A549 (cell line): ENCODE measurements at regions of chr6 and their contacts with region 1.

Region 1: GRCh38 chr6:44265007-44265721 is at the start of gene NFKBIE:
- DNase-seq: peak; percentile 80 to 84
- ATAC-seq: peak; percentile 73 to 83
- H3K4me3 ChIP-seq: peak within 1 kb of the TSS; percentile 81
- H3K27ac ChIP-seq: peak within 1 kb of the TSS; percentile 81 to 90
- H3K4me1 ChIP-seq: peaks cover 23% of the 10 kb centered on the region
- CTCF ChIP-seq: peak; percentile 19; the same call in 2 of the 3 replicates
- EP300 ChIP-seq: no peak
- POLR2A ChIP-seq: peak; percentile 81
- RAD21 ChIP-seq: no peak; a peak in 1 of 5 replicates
- polyA plus RNA-seq, gene NFKBIE: 6.2 and 6.3 TPM in 2 replicates

Region 2: DNA sequence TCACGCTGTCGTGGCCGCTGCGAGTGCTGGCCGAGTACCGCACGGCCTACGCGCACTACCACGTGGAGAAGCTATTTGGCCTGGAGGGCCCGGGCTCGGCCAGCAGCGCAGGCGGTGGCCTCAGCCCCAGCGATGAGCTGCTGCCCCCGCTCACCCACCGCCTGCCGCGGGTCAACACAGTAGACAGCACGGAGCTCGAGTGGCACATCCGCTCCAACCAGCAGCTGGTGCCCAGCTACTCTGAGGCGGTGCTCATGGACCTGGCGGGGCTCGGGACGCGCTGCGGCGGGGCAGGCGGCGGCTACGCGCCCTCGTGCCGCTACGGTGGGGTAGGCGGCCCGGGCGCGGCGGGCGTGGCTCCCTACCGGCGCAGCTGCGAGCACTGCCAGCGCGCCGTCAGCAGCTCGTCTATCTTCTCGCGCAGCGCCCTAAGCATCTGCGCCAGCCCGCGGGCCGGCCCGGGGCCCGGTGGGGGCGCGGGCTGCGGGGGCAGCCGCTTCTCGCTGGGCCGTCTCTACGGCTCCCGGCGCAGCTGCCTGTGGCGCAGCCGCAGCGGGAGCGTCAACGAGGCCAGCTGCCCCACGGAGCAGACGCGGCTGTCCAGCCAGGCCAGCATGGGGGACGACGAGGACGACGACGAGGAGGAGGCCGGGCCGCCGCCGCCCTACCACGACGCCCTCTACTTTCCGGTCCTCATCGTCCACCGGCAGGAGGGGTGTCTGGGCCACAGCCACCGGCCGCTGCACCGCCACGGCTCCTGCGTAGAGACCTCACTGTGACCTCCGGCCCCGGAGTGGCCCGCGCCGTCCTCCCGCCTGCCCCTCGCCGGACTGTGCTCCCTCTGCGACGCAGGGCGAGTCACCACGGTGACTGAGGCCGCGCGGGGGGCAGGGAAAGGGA is 10.8 kb after region 1 on chr6:
- CTCF ChIA-PET with region 1: interaction called, 29 read pairs
- POLR2A ChIA-PET with region 1: no interaction called
- DNase-seq: no peak
- ATAC-seq: no peak
- H3K4me3 ChIP-seq: no peak overlapping the region
- H3K27ac ChIP-seq: no peak overlapping the region
- H3K4me1 ChIP-seq: no peaks in the 10 kb centered on the region
- CTCF ChIP-seq: no peak
- EP300 ChIP-seq: no peak
- POLR2A ChIP-seq: no peak
- RAD21 ChIP-seq: no peak

Region 3: DNA sequence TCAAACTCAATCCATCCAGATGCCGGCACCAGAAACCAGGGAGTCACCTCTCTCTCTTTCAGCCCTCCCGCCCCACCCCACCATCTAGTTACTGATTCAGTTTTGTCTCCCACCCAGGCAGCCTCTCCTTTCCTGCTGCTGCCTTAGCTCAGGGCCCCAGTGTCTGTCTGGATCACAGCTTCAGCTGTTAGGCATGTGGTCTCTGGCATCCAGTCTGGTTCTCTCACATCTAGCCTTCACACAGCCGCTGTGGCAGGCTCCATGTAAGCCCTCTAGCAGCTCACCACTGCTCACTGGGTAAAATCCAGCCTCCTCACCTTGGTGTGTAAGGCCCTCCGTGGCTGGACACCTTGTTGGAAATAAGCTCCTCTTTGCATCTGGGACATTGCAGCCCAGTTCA is 26.7 kb after region 1 on chr6:
- CTCF ChIA-PET with region 1: interaction called, 25 read pairs
- POLR2A ChIA-PET with region 1: no interaction called
- DNase-seq: no peak
- ATAC-seq: peak in 1 of 2 experiments; percentile 49; a peak in 2 of 6 replicates
- H3K4me3 ChIP-seq: no peak overlapping the region
- H3K27ac ChIP-seq: no peak overlapping the region
- H3K4me1 ChIP-seq: no peaks in the 10 kb centered on the region
- CTCF ChIP-seq: no peak
- EP300 ChIP-seq: no peak
- POLR2A ChIP-seq: no peak
- RAD21 ChIP-seq: no peak

Region 4: DNA sequence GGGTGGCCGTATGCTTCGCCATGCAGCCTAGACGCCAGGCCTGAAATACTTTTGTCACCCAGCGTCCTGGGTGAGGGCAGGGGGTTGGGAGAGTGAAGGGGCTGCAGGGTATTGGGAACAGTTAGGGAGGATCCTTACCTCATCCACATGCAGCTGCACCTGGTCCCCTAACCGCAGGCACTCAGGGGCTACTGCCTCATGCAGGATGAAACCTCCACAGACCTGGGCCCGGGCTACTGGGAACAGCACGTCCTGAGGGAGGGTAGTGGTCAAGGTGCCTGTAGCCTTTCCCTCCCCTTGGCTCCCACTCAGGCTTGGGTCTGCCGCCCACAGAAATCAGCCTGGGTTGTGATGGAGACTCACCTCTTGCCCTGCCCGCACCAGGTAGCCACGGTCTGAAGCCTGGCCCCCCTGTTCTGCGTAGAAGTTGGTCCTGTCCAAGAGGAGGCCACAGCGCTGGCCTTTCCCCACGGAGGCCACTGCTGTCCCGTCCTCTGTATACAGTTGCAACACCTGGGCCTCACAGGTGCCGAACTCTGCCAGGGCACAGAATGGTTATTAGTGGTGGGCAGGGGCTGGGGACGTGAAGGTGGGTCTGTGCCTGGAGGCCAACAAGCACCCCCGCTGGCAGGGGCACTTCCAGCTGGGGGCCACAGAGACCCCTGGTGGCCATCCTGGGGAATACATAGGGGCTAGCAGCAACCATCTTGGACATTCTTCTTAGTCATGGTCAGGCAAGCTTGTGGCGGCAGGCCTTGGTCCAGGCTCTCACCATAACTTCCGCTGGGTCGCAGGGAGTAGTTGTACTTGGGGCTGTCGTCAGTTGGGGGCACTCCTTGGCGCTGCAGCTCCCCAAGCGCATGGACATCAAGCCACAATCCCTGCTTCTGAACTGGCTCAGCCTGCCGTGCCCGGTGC is 39.4 kb after region 1 on chr6:
- CTCF ChIA-PET with region 1: interaction called, 44 read pairs
- POLR2A ChIA-PET with region 1: no interaction called
- DNase-seq: peak; percentile 35 to 42
- ATAC-seq: peak; percentile 56 to 85; a peak in 4 of 6 replicates
- H3K4me3 ChIP-seq: no peak overlapping the region
- H3K27ac ChIP-seq: no peak overlapping the region
- H3K4me1 ChIP-seq: no peaks in the 10 kb centered on the region
- CTCF ChIP-seq: peak; percentile 39; the same call in 2 of the 3 replicates
- EP300 ChIP-seq: no peak
- POLR2A ChIP-seq: no peak
- RAD21 ChIP-seq: no peak; a peak in 1 of 5 replicates

Region 5: GRCh38 chr6:44332585-44332984 is 67.4 kb after region 1 on chr6:
- CTCF ChIA-PET with region 1: interaction called, 181 read pairs
- POLR2A ChIA-PET with region 1: no interaction called
- DNase-seq: no peak
- ATAC-seq: no peak
- H3K4me3 ChIP-seq: no peak overlapping the region
- H3K27ac ChIP-seq: no peak overlapping the region
- H3K4me1 ChIP-seq: no peaks in the 10 kb centered on the region
- CTCF ChIP-seq: no peak
- EP300 ChIP-seq: no peak
- POLR2A ChIP-seq: no peak
- RAD21 ChIP-seq: no peak

Region 6: GRCh38 chr6:44697327-44697726 is 432.2 kb after region 1 on chr6:
- CTCF ChIA-PET with region 1: no interaction called
- POLR2A ChIA-PET with region 1: no interaction called
- DNase-seq: no peak
- ATAC-seq: no peak
- H3K4me3 ChIP-seq: no peak overlapping the region
- H3K27ac ChIP-seq: no peak overlapping the region
- H3K4me1 ChIP-seq: no peaks in the 10 kb centered on the region
- CTCF ChIP-seq: no peak
- EP300 ChIP-seq: no peak
- POLR2A ChIP-seq: no peak
- RAD21 ChIP-seq: no peak